ENCODE measurements at regions of chr15 and their contacts with region 1.

Region 1: GRCh38 chr15:44728576-44729407 is 7.5 kb upstream of the TRIM69 start:
- DNase-seq: peak; percentile 89 to 99 (median 95)
- H3K4me3 ChIP-seq: peak overlapping the region; percentile 33 to 97 (median 85)
- H3K27ac ChIP-seq: peak overlapping the region; percentile 78 to 100 (median 97)
- H3K27me3 ChIP-seq: no peaks in the 10 kb centered on the region
- CTCF ChIP-seq: peak in 21 of 56 donors; percentile 6 to 55 (median 20)

Region 2: DNA sequence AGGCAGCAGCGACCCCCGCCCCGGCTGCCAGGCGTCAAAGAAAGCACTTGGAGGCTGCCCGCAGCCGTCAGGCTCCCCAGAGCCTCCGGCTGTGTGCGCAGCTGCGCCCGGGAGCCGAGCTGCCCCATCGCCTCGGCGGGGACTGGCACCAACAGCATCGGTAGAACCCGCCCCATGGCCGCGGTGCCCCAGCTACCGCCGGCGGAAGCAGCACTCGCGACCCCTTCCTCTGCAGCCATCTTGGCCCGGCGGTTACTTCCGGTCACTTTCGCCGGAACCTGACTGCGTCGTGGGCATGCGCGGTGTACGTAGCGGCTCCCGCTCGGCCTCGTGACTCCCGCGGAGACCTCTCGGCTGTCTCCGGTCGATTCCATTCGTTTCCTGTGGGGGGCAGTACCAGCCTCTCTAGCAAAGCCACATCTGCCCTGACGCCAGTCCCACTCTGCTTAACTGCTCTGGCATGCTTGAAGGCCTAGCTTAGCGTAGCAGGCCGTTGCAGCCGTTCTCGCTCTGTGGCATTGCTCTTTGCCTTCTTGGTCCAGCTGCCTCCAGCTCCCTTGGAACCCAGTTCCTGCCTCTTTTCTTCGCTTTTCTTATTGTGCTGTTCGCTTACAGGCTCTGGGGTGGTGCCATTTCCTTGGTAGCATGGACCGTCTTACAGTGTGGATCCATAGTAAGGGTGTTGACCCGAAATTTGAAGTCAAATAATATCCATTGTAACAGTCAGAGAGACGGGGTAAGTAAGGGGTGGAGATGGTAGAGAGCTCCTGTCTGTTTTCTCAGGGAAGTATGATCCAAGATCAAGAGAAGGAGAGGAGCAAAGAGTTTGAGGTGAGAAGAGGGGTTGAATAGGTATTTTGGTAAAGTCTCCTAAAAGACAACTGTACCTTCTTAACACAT is 65.1 kb before region 1 on chr15 and contains the start of gene SPG11:
- intact Hi-C with region 1: loop called (anchors 2 to 5 kb)
- DNase-seq: peak; percentile 93 to 98 (median 96)
- H3K4me3 ChIP-seq: peak within 1 kb of the TSS; percentile 61 to 100 (median 96)
- H3K27ac ChIP-seq: peak within 1 kb of the TSS; percentile 78 to 99 (median 97)
- H3K27me3 ChIP-seq: no peaks in the 10 kb centered on the region
- CTCF ChIP-seq: peak; percentile 86 to 99 (median 97)
- total RNA-seq, gene SPG11: 41.3 to 116 (median 77.5) TPM

Region 3: GRCh38 chr15:44775953-44776352 is 47.2 kb after region 1 on chr15:
- intact Hi-C with region 1: loop called in 1 of 2 experiments (anchors 2 kb)
- DNase-seq: peak in 9 of 10 donors; percentile 49 to 84 (median 64)
- H3K4me3 ChIP-seq: peak overlapping the region in 8 of 59 donors; percentile 8 to 32 (median 16)
- H3K27ac ChIP-seq: peak overlapping the region in 56 of 59 donors; percentile 1 to 89 (median 66)
- H3K27me3 ChIP-seq: no peaks in the 10 kb centered on the region
- CTCF ChIP-seq: peak in 3 of 56 donors; percentile 7 to 19 (median 12)

Measured in dorsolateral prefrontal cortex (tissue), 120 donors.